Activated CD4-positive, alpha-beta T cell treated with anti-CD3 and anti-CD28 coated beads for 36 hours (primary cell): ENCODE measurements at regions of chrX and their contacts with region 1.

Region 1: GRCh38 chrX:140071037-140071436 is 105.7 kb upstream of the CXorf66 start:
- DNase-seq: no peak
- ATAC-seq: no peak
- H3K4me3 Mint-ChIP-seq: no peak overlapping the region
- H3K27ac Mint-ChIP-seq: no peak overlapping the region
- H3K4me1 Mint-ChIP-seq: no peaks in the 10 kb centered on the region
- H3K27me3 Mint-ChIP-seq: no peaks in the 10 kb centered on the region

Region 2: GRCh38 chrX:139967300-139967699 is 103.7 kb before region 1 on chrX:
- CTCF ChIA-PET with region 1: no interaction called
- POLR2A ChIA-PET with region 1: no interaction called
- intact Hi-C with region 1: no loop called
- DNase-seq: peak; percentile 7
- ATAC-seq: no peak
- H3K4me3 Mint-ChIP-seq: no peak overlapping the region
- H3K27ac Mint-ChIP-seq: no peak overlapping the region
- H3K4me1 Mint-ChIP-seq: no peaks in the 10 kb centered on the region
- H3K27me3 Mint-ChIP-seq: peaks cover 5% of the 10 kb centered on the region

Region 3: GRCh38 chrX:140123446-140123845 is 52.4 kb after region 1 on chrX:
- CTCF ChIA-PET with region 1: no interaction called
- POLR2A ChIA-PET with region 1: no interaction called
- intact Hi-C with region 1: no loop called
- DNase-seq: no peak
- ATAC-seq: no peak
- H3K4me3 Mint-ChIP-seq: no peak overlapping the region
- H3K27ac Mint-ChIP-seq: no peak overlapping the region
- H3K4me1 Mint-ChIP-seq: no peaks in the 10 kb centered on the region
- H3K27me3 Mint-ChIP-seq: no peaks in the 10 kb centered on the region

Region 4: GRCh38 chrX:140141444-140142029 is 70.5 kb after region 1 on chrX:
- CTCF ChIA-PET with region 1: no interaction called
- POLR2A ChIA-PET with region 1: no interaction called
- intact Hi-C with region 1: loop called in 1 of 2 experiments (anchors 1 kb)
- DNase-seq: peak; percentile 41
- ATAC-seq: no peak
- H3K4me3 Mint-ChIP-seq: no peak overlapping the region
- H3K27ac Mint-ChIP-seq: no peak overlapping the region
- H3K4me1 Mint-ChIP-seq: no peaks in the 10 kb centered on the region
- H3K27me3 Mint-ChIP-seq: no peaks in the 10 kb centered on the region